ENCODE measurements at regions of chr9 and their contacts with region 1.

Region 1: GRCh38 chr9:70484210-70485130 is 70.0 kb upstream of the KLF9 start:
- DNase-seq: no peak
- H3K4me3 ChIP-seq: no peak overlapping the region
- H3K27ac ChIP-seq: peak overlapping the region; percentile 97
- H3K4me1 ChIP-seq: peaks cover 93% of the 10 kb centered on the region
- H3K27me3 ChIP-seq: no peaks in the 10 kb centered on the region
- CTCF ChIP-seq: peak; percentile 91

Region 2: GRCh38 chr9:70352802-70353201 is 131.7 kb before region 1 on chr9:
- intact Hi-C with region 1: loop called (anchors 10 kb)
- DNase-seq: no peak
- H3K4me3 ChIP-seq: no peak overlapping the region
- H3K27ac ChIP-seq: peak overlapping the region; percentile 29
- H3K4me1 ChIP-seq: peaks cover 26% of the 10 kb centered on the region
- H3K27me3 ChIP-seq: no peaks in the 10 kb centered on the region
- CTCF ChIP-seq: peak; percentile 84

Region 3: DNA sequence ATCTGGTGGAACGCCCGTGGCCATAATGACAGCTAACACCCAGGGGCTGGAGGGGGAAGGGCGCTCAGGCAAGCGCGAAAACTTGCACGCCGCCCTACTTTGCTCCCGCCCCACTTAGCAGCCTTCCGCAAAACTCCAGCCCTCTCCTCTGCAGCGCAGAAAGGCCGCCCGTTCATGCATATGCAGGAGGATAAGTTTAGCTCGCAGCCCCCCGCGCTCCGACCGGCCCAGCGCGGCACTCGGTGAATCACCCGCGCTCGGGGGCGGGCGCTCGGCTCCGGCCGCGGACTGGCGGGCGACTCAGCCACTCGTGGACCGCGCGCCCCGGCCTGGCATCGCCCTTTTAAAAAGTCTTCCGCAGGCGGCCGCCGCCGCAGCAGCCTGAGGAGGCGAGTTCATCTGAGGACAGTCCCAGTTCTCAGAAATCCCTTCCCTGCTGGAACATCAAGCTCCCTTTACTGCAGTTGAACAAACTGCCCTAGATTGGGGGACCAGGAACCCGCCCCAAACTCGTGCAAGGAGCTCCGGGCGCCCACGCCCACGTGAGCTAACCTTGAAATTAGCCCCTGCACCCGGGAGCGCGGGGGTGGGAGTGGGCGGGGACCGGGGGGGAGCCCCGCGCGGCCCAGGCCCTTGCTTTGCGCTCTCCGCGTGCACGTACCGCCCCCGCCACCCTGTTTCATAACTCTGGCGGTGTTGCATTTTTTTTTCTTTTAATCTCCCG is 65.5 kb before region 1 on chr9:
- intact Hi-C with region 1: loop called (anchors 5 kb)
- DNase-seq: peak; percentile 97
- H3K4me3 ChIP-seq: peak overlapping the region; percentile 73
- H3K27ac ChIP-seq: peak overlapping the region; percentile 100
- H3K4me1 ChIP-seq: peaks cover 78% of the 10 kb centered on the region
- H3K27me3 ChIP-seq: no peaks in the 10 kb centered on the region
- CTCF ChIP-seq: no peak

Region 4: DNA sequence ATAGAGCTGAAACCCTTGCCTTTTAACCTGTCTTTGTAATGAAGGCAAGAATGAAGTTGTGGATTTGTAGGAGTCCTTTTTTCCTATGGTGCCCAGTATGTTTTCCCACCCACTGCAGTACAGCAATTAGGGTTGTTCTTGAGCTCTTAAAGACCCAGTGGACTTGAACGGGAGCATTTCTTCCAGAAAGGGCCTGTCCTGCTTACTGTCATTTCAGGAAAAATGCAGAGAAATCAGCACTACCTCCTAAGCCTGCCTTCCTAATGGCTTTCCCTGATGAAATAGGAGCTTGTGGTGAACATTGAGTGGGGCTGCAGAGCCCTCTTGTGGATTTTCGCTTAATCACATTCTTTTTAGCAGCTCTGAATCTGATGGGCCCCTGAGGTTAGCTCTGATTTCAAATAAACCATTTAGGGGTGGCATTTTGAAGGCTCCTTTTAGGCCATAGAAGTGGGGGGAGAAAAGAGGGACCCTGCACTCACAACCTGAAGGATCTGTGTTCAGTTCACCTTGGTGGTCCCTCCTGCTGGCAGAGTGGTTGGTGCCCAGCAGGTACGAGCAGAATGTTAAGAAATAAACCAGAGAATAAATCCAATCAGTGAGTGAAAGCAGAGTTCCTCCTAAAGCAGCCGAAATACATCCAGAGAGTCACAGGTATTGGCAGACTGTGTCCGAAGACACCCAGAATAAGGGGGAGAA is 118.0 kb after region 1 on chr9:
- intact Hi-C with region 1: loop called (anchors 5 kb)
- DNase-seq: no peak
- H3K4me3 ChIP-seq: peak overlapping the region; percentile 48
- H3K27ac ChIP-seq: peak overlapping the region; percentile 95
- H3K4me1 ChIP-seq: peaks cover 37% of the 10 kb centered on the region
- H3K27me3 ChIP-seq: no peaks in the 10 kb centered on the region
- CTCF ChIP-seq: peak; percentile 88